HEK293 (cell line): ENCODE measurements at regions of chr11 and their contacts with region 1.

Region 1: GRCh38 chr11:107916671-107917241 is 11.5 kb upstream of the RAB39A start:
- H3K4me3 ChIP-seq: no peak overlapping the region
- H3K27ac ChIP-seq: no peak overlapping the region
- H3K4me1 ChIP-seq: no peaks in the 10 kb centered on the region
- CTCF ChIP-seq: peak; percentile 55; the same call in 1 of the 2 replicates

Region 2: GRCh38 chr11:107929611-107930200 is 12.9 kb after region 1 on chr11:
- CTCF ChIA-PET with region 1: interaction called, 10 read pairs
- POLR2A ChIA-PET with region 1: no interaction called
- H3K4me3 ChIP-seq: no peak overlapping the region
- H3K27ac ChIP-seq: no peak overlapping the region
- H3K4me1 ChIP-seq: no peaks in the 10 kb centered on the region
- CTCF ChIP-seq: no peak

Region 3: DNA sequence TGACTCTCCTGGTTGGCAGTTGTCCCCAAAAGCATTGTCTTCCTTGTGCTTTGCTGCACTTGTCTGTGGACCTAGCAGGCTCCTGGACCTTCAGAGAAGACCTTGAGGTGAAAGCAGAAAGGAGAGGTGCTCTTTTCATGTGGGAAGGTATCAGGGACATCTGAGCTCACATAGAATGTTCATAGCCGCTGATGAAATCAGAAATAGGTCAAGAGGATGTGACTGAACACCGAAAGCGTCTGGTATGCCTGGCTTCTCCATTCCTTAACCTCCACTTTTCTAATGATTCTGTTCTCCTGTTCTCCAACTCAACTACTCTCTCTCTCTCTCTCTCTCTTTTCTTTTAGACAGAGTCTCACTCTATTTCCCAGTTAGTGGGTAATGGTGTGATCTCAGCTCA is 85.7 kb after region 1 on chr11:
- CTCF ChIA-PET with region 1: no interaction called
- POLR2A ChIA-PET with region 1: no interaction called
- H3K4me3 ChIP-seq: no peak overlapping the region
- H3K27ac ChIP-seq: no peak overlapping the region
- H3K4me1 ChIP-seq: no peaks in the 10 kb centered on the region
- CTCF ChIP-seq: no peak